ENCODE measurements at regions of chr2 and their contacts with region 1.

Region 1: GRCh38 chr2:104733544-104733943 is 120.4 kb upstream of the POU3F3 start:
- DNase-seq: peak; percentile 10
- H3K4me3 ChIP-seq: no peak overlapping the region
- H3K27ac ChIP-seq: no peak overlapping the region
- H3K4me1 ChIP-seq: no peaks in the 10 kb centered on the region
- H3K27me3 ChIP-seq: no peaks in the 10 kb centered on the region
- CTCF ChIP-seq: peak in 1 of 5 experiments; percentile 17
- EP300 ChIP-seq: no peak
- POLR2A ChIP-seq: no peak

Region 2: DNA sequence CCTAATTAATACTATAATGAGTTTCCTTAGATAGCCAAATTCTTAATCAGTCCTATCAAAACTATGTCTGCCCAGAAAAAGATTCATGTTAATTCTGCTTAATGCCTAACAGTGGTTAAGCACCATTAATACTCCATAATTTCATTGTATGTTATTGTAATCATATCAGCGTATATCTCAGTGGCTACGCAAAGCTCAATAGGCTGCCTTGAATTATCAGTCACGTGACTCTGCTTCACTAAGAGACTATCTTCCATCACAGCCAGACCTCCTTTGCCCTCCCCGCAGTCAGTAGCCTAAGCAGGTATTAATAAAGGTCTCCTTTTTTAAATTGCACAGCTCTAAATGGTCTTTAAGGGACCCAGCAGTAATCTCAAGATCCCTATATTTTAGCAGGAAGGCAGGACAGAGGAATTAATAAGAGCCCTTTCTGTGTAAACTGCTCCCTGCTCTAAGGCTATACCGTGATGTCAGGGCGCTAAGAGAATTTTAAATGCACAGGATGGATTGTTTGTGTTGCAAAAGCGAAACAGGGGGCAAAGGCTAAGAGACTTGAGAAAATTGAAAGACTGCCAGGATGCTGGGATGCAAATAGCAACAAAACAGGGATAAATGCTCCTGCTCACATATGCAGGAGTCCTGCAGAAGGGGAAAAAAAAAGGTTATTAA is 95.2 kb before region 1 on chr2:
- in situ Hi-C with region 1: no loop called
- intact Hi-C with region 1: no loop called
- DNase-seq: no peak
- H3K4me3 ChIP-seq: no peak overlapping the region
- H3K27ac ChIP-seq: no peak overlapping the region
- H3K4me1 ChIP-seq: no peaks in the 10 kb centered on the region
- H3K27me3 ChIP-seq: no peaks in the 10 kb centered on the region
- CTCF ChIP-seq: no peak
- EP300 ChIP-seq: no peak
- POLR2A ChIP-seq: no peak

Region 3: DNA sequence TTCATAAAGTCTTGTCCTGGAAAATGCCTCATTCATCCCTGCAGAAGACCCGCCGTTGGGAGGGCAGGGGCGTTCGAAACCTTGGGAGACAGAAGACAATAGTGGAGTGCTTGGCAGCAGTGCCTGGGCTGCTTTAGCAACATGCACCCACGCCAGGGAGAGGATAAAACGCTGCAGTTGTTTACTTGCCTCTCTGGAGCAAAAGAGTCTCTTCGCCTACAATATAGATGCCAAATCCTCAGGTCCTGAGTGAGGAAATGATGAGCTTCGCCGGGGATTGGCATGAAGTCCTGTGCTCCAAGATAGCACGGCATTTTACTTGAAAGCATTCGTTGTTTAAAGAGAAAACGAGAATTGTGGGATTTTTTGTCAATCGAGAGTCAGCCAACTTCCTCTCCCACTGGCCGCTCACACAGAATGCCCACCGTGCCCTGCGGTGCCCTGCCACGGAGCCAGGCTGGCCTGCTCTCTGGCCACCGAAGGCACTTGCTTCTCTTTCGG is 32.1 kb before region 1 on chr2:
- in situ Hi-C with region 1: no loop called
- intact Hi-C with region 1: loop called (anchors 1 kb)
- DNase-seq: no peak
- H3K4me3 ChIP-seq: no peak overlapping the region
- H3K27ac ChIP-seq: no peak overlapping the region
- H3K4me1 ChIP-seq: no peaks in the 10 kb centered on the region
- H3K27me3 ChIP-seq: no peaks in the 10 kb centered on the region
- CTCF ChIP-seq: no peak
- EP300 ChIP-seq: no peak
- POLR2A ChIP-seq: no peak

Region 4: DNA sequence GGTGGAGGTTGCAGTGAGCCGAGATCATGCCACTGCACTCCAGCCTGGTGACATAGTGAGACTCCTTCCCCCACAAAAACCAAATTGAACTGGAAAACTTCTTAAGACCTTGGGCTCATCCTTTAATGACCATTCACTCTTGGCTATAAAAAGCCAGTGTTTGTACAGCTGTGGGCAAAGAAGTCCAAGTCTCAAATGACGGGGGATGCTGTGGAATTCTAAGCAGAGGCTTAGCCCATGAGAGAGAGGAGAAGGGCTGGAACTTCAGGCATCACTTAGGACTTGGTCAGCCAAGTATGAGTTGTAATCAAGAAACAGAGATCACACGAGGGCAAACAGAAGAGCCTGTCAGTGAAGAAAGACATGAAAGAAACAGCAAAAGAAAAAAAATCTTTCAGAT is 41.1 kb after region 1 on chr2:
- in situ Hi-C with region 1: no loop called
- intact Hi-C with region 1: no loop called
- DNase-seq: no peak
- H3K4me3 ChIP-seq: no peak overlapping the region
- H3K27ac ChIP-seq: no peak overlapping the region
- H3K4me1 ChIP-seq: no peaks in the 10 kb centered on the region
- H3K27me3 ChIP-seq: no peaks in the 10 kb centered on the region
- CTCF ChIP-seq: no peak
- EP300 ChIP-seq: no peak
- POLR2A ChIP-seq: no peak

Measured in transverse colon (tissue), 4 donors.